ENCODE measurements at regions of chr14 and their contacts with region 1.

Region 1: DNA sequence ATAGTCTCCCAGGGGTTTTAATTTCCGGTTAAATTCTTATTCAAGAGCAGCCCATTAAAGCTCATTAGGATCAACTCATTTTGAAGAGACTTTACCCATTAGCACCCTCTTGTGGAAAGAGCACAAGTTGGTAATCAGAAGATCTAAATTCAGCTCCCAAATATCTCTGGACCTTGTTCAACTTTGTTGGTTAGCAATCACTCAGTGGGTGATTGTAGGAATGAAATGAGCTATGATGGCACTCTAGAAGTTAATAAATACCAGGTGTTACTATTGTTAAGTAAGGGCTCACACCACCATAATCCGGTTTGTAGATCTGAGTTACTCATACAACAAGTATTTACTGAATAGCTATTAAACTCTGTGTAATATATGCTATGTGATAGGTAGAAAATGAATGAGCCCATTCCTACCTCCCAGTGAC is 42.9 kb downstream of the TRIP11 start:
- DNase-seq: peak in 4 of 35 experiments; percentile 2 to 68 (median 6)
- ATAC-seq: peak in 3 of 4 experiments; percentile 48 to 53 (median 52)
- H3K4me3 ChIP-seq: no peak overlapping the region
- H3K4me3 Mint-ChIP-seq: peak overlapping the region in 1 of 3 donors; percentile 15
- H3K27ac ChIP-seq: no peak overlapping the region
- H3K27ac Mint-ChIP-seq: peak overlapping the region in 1 of 2 donors; percentile 71
- H3K4me1 ChIP-seq: peaks cover 0 to 22% of the 10 kb centered on the region in 2 experiments
- H3K4me1 Mint-ChIP-seq: peaks cover 36 to 45% (median 41%) of the 10 kb centered on the region in 3 donors
- H3K27me3 ChIP-seq: no peaks in the 10 kb centered on the region
- H3K27me3 Mint-ChIP-seq: no peaks in the 10 kb centered on the region

Region 2: GRCh38 chr14:90671382-90672234 is 1325.4 kb before region 1 on chr14:
- CTCF ChIA-PET with region 1: no interaction called
- POLR2A ChIA-PET with region 1: interaction called in 1 of 2 experiments, 15 read pairs
- DNase-seq: no peak
- ATAC-seq: no peak
- H3K4me3 ChIP-seq: no peak overlapping the region
- H3K4me3 Mint-ChIP-seq: no peak overlapping the region
- H3K27ac ChIP-seq: no peak overlapping the region
- H3K27ac Mint-ChIP-seq: peak overlapping the region in 1 of 2 donors; percentile 56
- H3K4me1 ChIP-seq: peaks cover 0 to 3% of the 10 kb centered on the region in 2 experiments
- H3K4me1 Mint-ChIP-seq: peaks cover 0 to 24% (median 19%) of the 10 kb centered on the region in 3 donors
- H3K27me3 ChIP-seq: no peaks in the 10 kb centered on the region
- H3K27me3 Mint-ChIP-seq: no peaks in the 10 kb centered on the region

Measured in T-cell (primary cell).